ENCODE measurements at regions of chr2 and their contacts with region 1.

Region 1: DNA sequence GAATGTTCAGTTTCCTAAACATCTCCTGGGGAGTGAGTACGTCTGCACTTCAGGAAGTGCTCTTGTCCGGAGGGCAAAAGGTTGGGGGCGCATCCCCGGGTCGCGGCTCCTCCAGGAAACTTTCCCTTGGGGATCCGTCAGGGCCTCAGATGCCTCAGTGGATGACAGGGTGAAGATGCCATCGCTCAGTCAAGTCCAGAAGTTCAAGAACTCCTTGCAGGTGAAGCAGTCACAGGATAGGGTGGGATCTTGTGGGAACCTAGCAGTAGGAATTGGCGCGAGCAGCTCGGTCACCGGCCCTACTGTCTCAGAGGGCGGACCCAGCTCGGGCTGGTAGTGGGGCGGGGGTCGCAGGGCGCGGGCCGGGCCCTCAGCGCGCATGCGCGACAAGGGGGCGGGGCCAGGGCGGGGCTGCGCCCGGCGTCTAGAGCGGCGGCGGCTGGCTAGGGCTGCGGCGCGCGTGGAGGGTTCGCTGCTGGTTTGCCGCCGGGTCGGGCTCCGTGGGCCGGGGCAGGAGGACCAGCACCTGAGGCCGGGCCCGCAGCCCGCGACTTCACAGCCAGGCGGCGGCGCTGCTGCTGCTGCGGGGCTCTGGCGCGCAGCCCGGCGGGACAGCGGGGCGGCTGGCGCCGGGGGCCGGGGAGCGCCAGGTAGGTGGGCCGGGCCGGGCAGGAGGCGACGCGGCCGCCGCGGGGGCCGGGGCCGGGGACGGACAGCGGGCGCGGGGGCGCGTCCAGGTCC is at the start of gene INPP4A:
- DNase-seq: peak; percentile 67 to 86 (median 78)
- ATAC-seq: peak; percentile 82
- H3K4me3 ChIP-seq: peak within 1 kb of the TSS; percentile 93
- H3K4me3 Mint-ChIP-seq: peak within 1 kb of the TSS; percentile 91 to 99 (median 97)
- H3K27ac ChIP-seq: peak within 1 kb of the TSS; percentile 83
- H3K27ac Mint-ChIP-seq: peak within 1 kb of the TSS; percentile 91 to 99 (median 97)
- H3K4me1 ChIP-seq: peaks cover 21 to 37% of the 10 kb centered on the region in 2 donors
- H3K4me1 Mint-ChIP-seq: peaks cover 19 to 54% (median 39%) of the 10 kb centered on the region in 7 donors
- H3K27me3 ChIP-seq: no peaks in the 10 kb centered on the region
- H3K27me3 Mint-ChIP-seq: no peaks in the 10 kb centered on the region
- total RNA-seq, gene INPP4A: 126 to 165 (median 157) TPM

Region 2: GRCh38 chr2:98378930-98379671 is 65.5 kb before region 1 on chr2:
- CTCF ChIA-PET with region 1: no interaction called
- POLR2A ChIA-PET with region 1: no interaction called
- intact Hi-C with region 1: no loop called
- DNase-seq: no peak
- ATAC-seq: no peak
- H3K4me3 ChIP-seq: no peak overlapping the region
- H3K4me3 Mint-ChIP-seq: no peak overlapping the region
- H3K27ac ChIP-seq: no peak overlapping the region
- H3K27ac Mint-ChIP-seq: no peak overlapping the region
- H3K4me1 ChIP-seq: no peaks in the 10 kb centered on the region
- H3K4me1 Mint-ChIP-seq: peaks cover 0 to 5% (median 0%) of the 10 kb centered on the region in 7 donors
- H3K27me3 ChIP-seq: no peaks in the 10 kb centered on the region
- H3K27me3 Mint-ChIP-seq: peaks cover 9 to 23% (median 12%) of the 10 kb centered on the region in 5 donors

Region 3: GRCh38 chr2:98465456-98466226 is 21.0 kb after region 1 on chr2:
- CTCF ChIA-PET with region 1: interaction called, 19 read pairs
- POLR2A ChIA-PET with region 1: interaction called, 140 read pairs
- intact Hi-C with region 1: loop called (anchors 1 kb)
- DNase-seq: peak; percentile 53 to 92 (median 85)
- ATAC-seq: peak; percentile 74
- H3K4me3 ChIP-seq: peak overlapping the region; percentile 61
- H3K4me3 Mint-ChIP-seq: peak overlapping the region; percentile 78 to 98 (median 87)
- H3K27ac ChIP-seq: peak overlapping the region; percentile 85
- H3K27ac Mint-ChIP-seq: peak overlapping the region; percentile 93 to 99 (median 96)
- H3K4me1 ChIP-seq: peaks cover 85 to 87% of the 10 kb centered on the region in 2 donors
- H3K4me1 Mint-ChIP-seq: peaks cover 70 to 95% (median 88%) of the 10 kb centered on the region in 7 donors
- H3K27me3 ChIP-seq: no peaks in the 10 kb centered on the region
- H3K27me3 Mint-ChIP-seq: no peaks in the 10 kb centered on the region

Region 4: DNA sequence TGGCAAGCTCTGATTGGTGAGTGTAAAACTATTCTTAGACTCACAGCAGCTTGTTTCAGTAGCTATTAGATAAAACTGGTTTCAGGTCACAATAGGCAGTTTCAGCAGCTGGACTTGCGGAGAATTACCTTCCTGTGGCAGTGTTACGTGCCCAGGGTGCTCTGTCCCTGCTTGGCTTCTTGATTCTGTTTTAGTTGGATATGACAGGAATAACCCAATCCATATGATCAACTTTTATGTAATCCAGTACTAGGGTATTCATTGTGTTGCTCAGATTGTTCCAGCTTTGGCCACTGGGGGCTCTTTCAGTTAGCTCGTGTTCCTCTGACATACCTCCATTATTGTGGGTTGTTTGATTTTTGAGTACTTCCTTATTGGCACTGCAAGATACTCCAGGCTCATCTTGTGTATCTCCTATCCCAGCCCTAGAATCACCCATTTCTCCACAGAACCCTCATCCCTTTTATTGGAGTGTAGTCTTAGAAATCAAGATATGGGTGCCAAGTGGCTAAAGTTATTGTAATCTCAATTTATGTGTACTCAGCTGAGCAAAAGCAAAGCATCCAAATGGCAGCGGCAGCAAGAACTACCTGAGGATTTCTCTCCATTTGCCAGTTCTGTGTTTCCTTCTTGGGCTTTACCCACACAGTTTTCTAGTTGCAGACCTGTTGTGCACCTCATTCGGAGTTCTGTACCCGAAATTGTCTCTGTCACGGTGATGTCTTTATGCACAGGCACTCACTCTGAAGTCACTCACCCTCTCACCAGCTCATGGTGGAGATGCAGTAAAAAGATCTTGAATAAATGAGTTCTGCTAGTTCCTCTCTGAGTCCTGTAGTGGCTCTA is 43.4 kb after region 1 on chr2:
- CTCF ChIA-PET with region 1: interaction called, 10 read pairs
- POLR2A ChIA-PET with region 1: interaction called, 7 read pairs
- intact Hi-C with region 1: loop called (anchors 1 kb)
- DNase-seq: peak in 7 of 9 donors; percentile 49 to 68 (median 59)
- ATAC-seq: peak; percentile 90
- H3K4me3 ChIP-seq: no peak overlapping the region
- H3K4me3 Mint-ChIP-seq: peak overlapping the region; percentile 16 to 82 (median 58)
- H3K27ac ChIP-seq: peak overlapping the region; percentile 23
- H3K27ac Mint-ChIP-seq: peak overlapping the region; percentile 38 to 93 (median 75)
- H3K4me1 ChIP-seq: peaks cover 69 to 76% of the 10 kb centered on the region in 2 donors
- H3K4me1 Mint-ChIP-seq: peaks cover 56 to 100% (median 99%) of the 10 kb centered on the region in 7 donors
- H3K27me3 ChIP-seq: no peaks in the 10 kb centered on the region
- H3K27me3 Mint-ChIP-seq: no peaks in the 10 kb centered on the region

Region 5: DNA sequence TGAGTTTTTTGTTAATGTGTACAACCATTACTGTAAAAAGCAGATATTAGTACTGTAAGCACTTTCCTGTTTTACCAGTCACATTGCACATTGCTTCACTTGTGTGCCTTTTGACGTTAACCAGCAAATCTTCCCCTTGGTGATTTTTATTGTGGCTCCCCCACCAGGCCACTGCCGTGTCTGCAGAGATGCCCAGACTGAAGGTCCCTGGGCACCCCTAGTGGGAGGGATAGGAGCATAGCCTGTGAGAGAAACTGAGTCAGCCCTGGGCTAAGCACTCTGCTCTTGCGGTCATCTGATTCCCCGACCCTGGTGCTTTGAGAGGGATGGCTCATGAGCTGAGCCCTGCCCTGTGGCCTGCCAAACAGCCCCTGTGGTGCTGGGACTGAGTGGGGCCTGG is 73.5 kb after region 1 on chr2:
- CTCF ChIA-PET with region 1: interaction called, 3 read pairs
- POLR2A ChIA-PET with region 1: no interaction called
- intact Hi-C with region 1: loop called (anchors 1 to 2 kb)
- DNase-seq: peak; percentile 37 to 75 (median 66)
- ATAC-seq: peak; percentile 89
- H3K4me3 ChIP-seq: no peak overlapping the region
- H3K4me3 Mint-ChIP-seq: peak overlapping the region in 1 of 10 donors; percentile 16
- H3K27ac ChIP-seq: peak overlapping the region; percentile 9
- H3K27ac Mint-ChIP-seq: peak overlapping the region in 7 of 9 donors; percentile 24 to 75 (median 57)
- H3K4me1 ChIP-seq: peaks cover 30 to 49% of the 10 kb centered on the region in 2 donors
- H3K4me1 Mint-ChIP-seq: peaks cover 34 to 64% (median 58%) of the 10 kb centered on the region in 7 donors
- H3K27me3 ChIP-seq: no peaks in the 10 kb centered on the region
- H3K27me3 Mint-ChIP-seq: no peaks in the 10 kb centered on the region

Region 6: GRCh38 chr2:98835831-98836385 is 391.3 kb after region 1 on chr2:
- CTCF ChIA-PET with region 1: no interaction called
- POLR2A ChIA-PET with region 1: no interaction called
- intact Hi-C with region 1: loop called in 1 of 2 experiments (anchors 1 kb)
- DNase-seq: peak in 7 of 9 donors; percentile 55 to 78 (median 72)
- ATAC-seq: peak; percentile 87
- H3K4me3 ChIP-seq: peak overlapping the region; percentile 1
- H3K4me3 Mint-ChIP-seq: peak overlapping the region; percentile 32 to 79 (median 52)
- H3K27ac ChIP-seq: peak overlapping the region; percentile 66
- H3K27ac Mint-ChIP-seq: peak overlapping the region; percentile 78 to 98 (median 88)
- H3K4me1 ChIP-seq: peaks cover 16 to 43% of the 10 kb centered on the region in 2 donors
- H3K4me1 Mint-ChIP-seq: peaks cover 24 to 51% (median 28%) of the 10 kb centered on the region in 7 donors
- H3K27me3 ChIP-seq: no peaks in the 10 kb centered on the region
- H3K27me3 Mint-ChIP-seq: peaks cover 0 to 17% (median 0%) of the 10 kb centered on the region in 5 donors